ENCODE measurements at regions of chr5 and their contacts with region 1.

Region 1: DNA sequence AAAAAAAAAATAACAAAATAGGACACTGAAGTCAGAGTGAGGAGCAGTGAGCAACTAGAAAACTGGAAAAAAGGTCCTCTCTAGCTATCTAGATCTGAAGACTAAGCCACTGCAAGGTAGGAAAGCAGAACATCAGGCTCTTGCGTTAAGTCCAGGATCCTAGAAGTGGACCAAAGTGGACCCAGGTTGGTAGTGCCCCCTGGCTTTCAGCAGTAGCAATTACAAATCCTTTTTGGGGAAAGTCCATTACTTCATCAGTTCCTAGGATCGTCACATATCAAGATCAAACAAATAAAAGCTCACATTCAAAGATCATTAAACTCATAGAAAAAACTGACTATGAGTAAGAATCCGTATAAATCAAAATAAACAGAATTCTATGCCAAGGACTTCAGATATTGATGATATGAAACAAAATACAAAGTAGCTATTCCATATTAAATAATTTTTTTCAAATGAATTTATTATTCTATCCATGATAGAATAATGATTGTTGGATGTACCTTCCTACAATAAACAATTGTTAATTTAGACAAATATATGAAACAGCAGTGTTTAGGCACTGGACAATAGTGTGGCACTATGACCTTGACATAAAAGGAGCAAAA is 6.5 kb upstream of the RICTOR start:
- DNase-seq: no peak
- ATAC-seq: peak; percentile 91 to 94
- H3K4me3 ChIP-seq: no peak overlapping the region
- H3K27ac ChIP-seq: no peak overlapping the region
- H3K4me1 ChIP-seq: peaks cover 27% of the 10 kb centered on the region
- H3K27me3 ChIP-seq: no peaks in the 10 kb centered on the region
- CTCF ChIP-seq: peak; percentile 84

Region 2: DNA sequence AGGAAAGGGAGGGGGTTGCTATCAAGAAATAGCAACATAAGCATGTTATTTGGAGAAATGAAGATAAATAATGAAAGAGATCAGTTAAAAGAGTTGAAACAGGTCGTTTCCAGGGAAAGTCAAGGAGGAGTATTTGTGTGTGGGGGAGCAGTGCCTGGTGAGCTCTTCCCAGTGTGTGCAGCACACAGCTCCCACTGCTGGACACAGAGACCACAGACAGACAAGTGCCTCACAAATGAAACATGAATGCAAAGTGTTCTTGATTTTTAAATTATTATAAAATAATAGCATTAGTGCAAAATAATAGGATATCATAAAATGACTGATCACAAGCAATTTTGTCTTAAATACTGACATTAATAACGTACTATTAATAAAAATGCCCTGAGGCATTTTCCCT is 565.1 kb before region 1 on chr5:
- intact Hi-C with region 1: no loop called
- DNase-seq: no peak
- ATAC-seq: no peak
- H3K4me3 ChIP-seq: no peak overlapping the region
- H3K27ac ChIP-seq: no peak overlapping the region
- H3K4me1 ChIP-seq: no peaks in the 10 kb centered on the region
- H3K27me3 ChIP-seq: no peaks in the 10 kb centered on the region
- CTCF ChIP-seq: peak; percentile 18

Region 3: GRCh38 chr5:38994324-38994927 is 86.3 kb before region 1 on chr5:
- intact Hi-C with region 1: loop called (anchors 10 kb)
- DNase-seq: no peak
- ATAC-seq: peak; percentile 64 to 85
- H3K4me3 ChIP-seq: no peak overlapping the region
- H3K27ac ChIP-seq: no peak overlapping the region
- H3K4me1 ChIP-seq: no peaks in the 10 kb centered on the region
- H3K27me3 ChIP-seq: no peaks in the 10 kb centered on the region
- CTCF ChIP-seq: peak; percentile 59